ENCODE measurements at regions of chr16 and their contacts with region 1.

Region 1: DNA sequence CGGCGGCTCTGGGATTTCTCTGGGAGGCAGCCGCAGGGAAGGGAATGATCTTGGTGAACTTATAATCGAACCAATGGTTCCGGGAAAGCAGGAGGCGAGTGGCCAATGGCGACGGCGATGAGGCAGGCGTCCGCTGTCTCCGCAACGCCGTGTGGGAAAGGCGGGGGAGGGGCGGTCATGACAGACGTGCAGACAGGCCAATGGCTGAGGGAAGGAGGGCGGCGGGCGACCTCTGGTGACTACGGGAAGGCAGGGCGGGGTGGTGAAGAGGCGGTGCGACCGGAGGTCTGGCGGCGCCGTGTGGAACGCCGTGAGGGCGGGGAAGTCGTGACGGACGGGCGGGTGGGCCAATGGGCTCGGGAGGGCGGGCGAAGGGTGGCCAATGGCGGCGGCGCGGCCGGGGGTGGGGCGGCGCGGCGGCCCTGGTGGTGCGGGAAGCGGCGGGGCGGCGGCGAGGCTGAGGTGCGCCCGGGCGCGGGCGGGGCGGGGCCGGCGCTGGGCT is at the start of gene RAB40C:
- DNase-seq: peak; percentile 88 to 99
- H3K4me3 ChIP-seq: peak within 1 kb of the TSS; percentile 81
- H3K27ac ChIP-seq: peak within 1 kb of the TSS; percentile 78
- H3K4me1 ChIP-seq: peaks cover 46% of the 10 kb centered on the region
- H3K27me3 ChIP-seq: no peaks in the 10 kb centered on the region
- CTCF ChIP-seq: no peak; the same call in 1 of the 2 replicates
- total RNA-seq, gene RAB40C: 43.6 and 47.1 TPM in 2 replicates

Region 2: GRCh38 chr16:212999-213398 is 376.7 kb before region 1 on chr16:
- CTCF ChIA-PET with region 1: no interaction called
- POLR2A ChIA-PET with region 1: no interaction called
- intact Hi-C with region 1: no loop called
- DNase-seq: no peak
- H3K4me3 ChIP-seq: no peak overlapping the region
- H3K27ac ChIP-seq: no peak overlapping the region
- H3K4me1 ChIP-seq: no peaks in the 10 kb centered on the region
- H3K27me3 ChIP-seq: no peaks in the 10 kb centered on the region
- CTCF ChIP-seq: no peak

Region 3: GRCh38 chr16:535446-536405 is 54.0 kb before region 1 on chr16:
- CTCF ChIA-PET with region 1: interaction called, 3 read pairs
- POLR2A ChIA-PET with region 1: no interaction called
- intact Hi-C with region 1: loop called (anchors 2 kb)
- DNase-seq: peak; percentile 92 to 99
- H3K4me3 ChIP-seq: no peak overlapping the region
- H3K27ac ChIP-seq: peak overlapping the region; percentile 66
- H3K4me1 ChIP-seq: peaks cover 33% of the 10 kb centered on the region
- H3K27me3 ChIP-seq: no peaks in the 10 kb centered on the region
- CTCF ChIP-seq: no peak; the same call in 1 of the 2 replicates

Region 4: DNA sequence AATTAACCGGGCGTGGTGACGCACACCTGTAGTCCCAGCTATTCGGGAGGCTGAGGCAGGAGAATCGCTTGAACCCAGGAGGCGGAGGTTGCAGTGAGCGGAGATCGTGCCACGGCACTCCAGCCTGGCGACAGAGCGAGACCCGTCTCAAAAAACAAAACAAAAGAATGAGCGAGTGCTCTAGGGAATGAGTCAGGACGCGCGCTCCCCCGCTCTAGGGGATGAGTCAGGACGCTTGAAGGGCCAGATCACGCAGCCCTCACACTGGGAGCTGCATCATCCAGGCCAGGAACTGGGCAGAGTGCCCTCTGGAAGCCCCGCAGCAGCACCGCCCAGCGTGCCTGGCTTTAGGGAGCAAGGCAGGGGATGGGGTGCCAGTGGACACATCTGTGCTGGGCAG is 37.1 kb after region 1 on chr16:
- CTCF ChIA-PET with region 1: interaction called, 3 read pairs
- POLR2A ChIA-PET with region 1: interaction called, 7 read pairs
- intact Hi-C with region 1: loop called (anchors 1 kb)
- DNase-seq: peak; percentile 87 to 94
- H3K4me3 ChIP-seq: no peak overlapping the region
- H3K27ac ChIP-seq: peak overlapping the region; percentile 76
- H3K4me1 ChIP-seq: peaks cover 24% of the 10 kb centered on the region
- H3K27me3 ChIP-seq: no peaks in the 10 kb centered on the region
- CTCF ChIP-seq: no peak

Region 5: GRCh38 chr16:636206-637080 is 46.7 kb after region 1 on chr16 and contains the start of gene METTL26:
- CTCF ChIA-PET with region 1: interaction called, 4 read pairs
- POLR2A ChIA-PET with region 1: interaction called, 4 read pairs
- intact Hi-C with region 1: loop called (anchors 2 kb)
- DNase-seq: peak; percentile 85 to 94
- H3K4me3 ChIP-seq: peak within 1 kb of the TSS; percentile 80
- H3K27ac ChIP-seq: peak within 1 kb of the TSS; percentile 80
- H3K4me1 ChIP-seq: peaks cover 11% of the 10 kb centered on the region; the same call in 1 of the 2 replicates
- H3K27me3 ChIP-seq: no peaks in the 10 kb centered on the region
- CTCF ChIP-seq: no peak
- total RNA-seq, gene METTL26: 144 and 158 TPM in 2 replicates

Region 6: GRCh38 chr16:648781-649589 is 59.3 kb after region 1 on chr16 and contains the start of gene WDR90:
- CTCF ChIA-PET with region 1: no interaction called
- POLR2A ChIA-PET with region 1: interaction called, 4 read pairs
- intact Hi-C with region 1: loop called (anchors 1 kb)
- DNase-seq: peak; percentile 84 to 95
- H3K4me3 ChIP-seq: peak within 1 kb of the TSS; percentile 85
- H3K27ac ChIP-seq: peak within 1 kb of the TSS; percentile 82
- H3K4me1 ChIP-seq: peaks cover 54% of the 10 kb centered on the region
- H3K27me3 ChIP-seq: no peaks in the 10 kb centered on the region
- CTCF ChIP-seq: no peak
- total RNA-seq, gene WDR90: 118 and 126 TPM in 2 replicates

Region 7: DNA sequence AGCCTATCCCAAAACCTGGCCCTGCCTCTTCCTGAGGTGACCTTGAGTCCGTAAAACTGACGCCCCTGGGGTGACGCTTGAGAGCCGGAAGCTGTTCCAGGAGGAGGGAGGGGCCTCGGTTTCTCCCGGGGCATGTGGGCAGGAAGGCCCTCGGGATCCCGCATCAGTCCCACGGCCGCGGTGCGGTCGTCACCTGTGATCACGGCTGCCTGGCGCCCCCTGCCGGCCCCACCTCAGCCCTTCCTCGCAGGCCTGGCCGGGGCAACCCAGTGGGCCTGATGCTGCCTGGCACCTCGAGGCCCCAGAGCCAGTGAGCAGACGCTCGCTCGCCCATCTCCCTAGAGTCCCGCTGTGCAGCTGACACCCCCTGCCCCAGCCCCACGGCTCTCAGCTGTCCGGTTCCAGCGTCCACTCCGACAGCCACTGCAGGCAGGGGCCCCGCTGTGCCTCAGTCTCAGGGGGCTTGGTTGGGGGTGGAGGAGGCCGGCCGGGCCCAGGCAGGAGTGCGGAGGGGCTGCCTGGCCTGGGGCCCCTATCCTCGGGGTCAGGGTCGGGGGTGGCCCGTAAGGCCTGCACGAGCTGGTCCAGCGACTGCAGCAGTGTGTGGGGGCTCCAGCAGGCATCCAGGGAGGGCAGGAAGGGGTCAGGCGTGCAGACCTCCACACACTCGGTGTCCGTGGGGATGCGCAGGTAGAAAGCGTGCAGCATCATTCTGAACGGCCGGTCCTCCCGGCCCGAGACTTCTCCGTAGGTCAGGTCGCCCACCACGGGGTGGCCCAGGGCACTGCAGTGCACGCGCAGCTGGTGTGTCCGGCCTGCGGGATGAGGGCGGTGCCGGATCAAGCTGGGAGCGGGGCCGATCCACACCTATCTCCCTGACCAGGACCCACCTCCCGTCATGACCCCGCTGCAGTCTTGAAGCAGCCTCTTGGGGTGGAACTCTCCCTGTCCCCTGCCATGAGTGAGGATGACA is 196.1 kb after region 1 on chr16:
- CTCF ChIA-PET with region 1: no interaction called
- POLR2A ChIA-PET with region 1: no interaction called
- intact Hi-C with region 1: no loop called
- DNase-seq: peak in 1 of 2 experiments; percentile 79
- H3K4me3 ChIP-seq: no peak overlapping the region
- H3K27ac ChIP-seq: no peak overlapping the region
- H3K4me1 ChIP-seq: peaks cover 16% of the 10 kb centered on the region
- H3K27me3 ChIP-seq: peaks cover 22% of the 10 kb centered on the region; the same call in 1 of the 2 replicates
- CTCF ChIP-seq: peak; percentile 81